ENCODE measurements at regions of chr11 and their contacts with region 1.

Region 1: DNA sequence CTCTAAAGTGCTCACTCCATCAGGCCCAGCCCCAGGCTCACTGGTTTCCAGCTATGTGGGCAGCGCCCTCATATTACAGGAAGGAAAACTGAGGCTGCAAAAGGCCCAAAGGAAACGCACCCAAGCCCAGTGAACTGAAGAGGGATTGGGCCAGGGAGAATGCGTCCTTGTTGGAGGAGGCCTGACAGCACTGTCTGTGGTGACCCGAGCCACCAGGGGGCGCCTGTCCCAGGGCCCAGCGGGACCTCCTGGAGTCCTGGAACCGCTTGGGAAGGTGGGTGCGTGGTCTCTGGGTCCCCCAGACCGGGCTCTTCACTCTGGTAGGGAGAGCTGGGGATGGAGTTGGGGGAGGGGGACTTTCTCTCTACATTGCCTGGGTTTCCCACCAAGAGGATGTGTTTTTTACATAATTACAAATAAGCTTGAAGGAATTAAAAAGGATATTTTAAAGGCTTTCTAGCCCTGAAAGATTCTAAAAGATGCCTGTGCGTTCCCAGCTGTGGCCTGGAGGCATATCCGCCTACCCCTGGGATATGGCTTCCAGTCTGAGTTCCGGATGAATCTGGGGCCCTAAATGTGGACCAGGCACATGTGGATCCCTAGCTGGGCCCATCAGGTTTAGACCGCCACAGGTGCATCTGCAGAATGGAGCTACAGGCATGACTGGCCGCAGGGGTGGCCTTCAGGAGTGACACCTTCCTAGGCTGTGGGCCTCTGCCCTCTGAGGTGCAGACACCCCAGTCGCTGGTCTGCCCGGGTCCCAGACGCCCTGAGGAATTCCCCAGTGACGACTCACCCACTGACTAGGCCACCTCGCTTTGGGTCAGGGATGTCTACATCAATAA is 4.2 kb downstream of the SPI1 start:
- DNase-seq: peak; percentile 74 to 84
- ATAC-seq: peak; percentile 88 to 96
- H3K4me3 ChIP-seq: no peak overlapping the region
- H3K27ac ChIP-seq: peak overlapping the region; percentile 31 to 58; a peak in 3 of 6 replicates
- H3K4me1 ChIP-seq: peaks cover 21% of the 10 kb centered on the region
- CTCF ChIP-seq: peak; percentile 93
- EP300 ChIP-seq: no peak
- POLR2A ChIP-seq: no peak
- RAD21 ChIP-seq: peak; percentile 65 to 68

Region 2: DNA sequence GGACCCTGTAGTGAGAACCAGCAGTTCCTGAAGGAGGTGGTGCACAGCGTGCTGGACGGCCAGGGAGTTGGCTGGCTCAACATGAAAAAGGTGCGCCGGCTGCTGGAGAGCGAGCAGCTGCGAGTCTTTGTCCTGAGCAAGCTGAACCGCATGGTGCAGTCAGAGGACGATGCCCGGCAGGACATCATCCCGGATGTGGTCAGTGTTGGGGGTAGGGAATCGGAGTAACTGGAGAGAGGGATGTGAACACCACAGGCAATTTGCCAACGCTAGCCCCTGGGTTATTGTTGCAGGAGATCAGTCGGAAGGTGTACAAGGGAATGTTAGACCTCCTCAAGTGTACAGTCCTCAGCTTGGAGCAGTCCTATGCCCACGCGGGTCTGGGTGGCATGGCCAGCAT is 84.2 kb before region 1 on chr11:
- CTCF ChIA-PET with region 1: interaction called, 10 read pairs
- POLR2A ChIA-PET with region 1: no interaction called
- DNase-seq: no peak
- ATAC-seq: peak in 1 of 2 experiments; percentile 30; a peak in 1 of 6 replicates
- H3K4me3 ChIP-seq: no peak overlapping the region
- H3K27ac ChIP-seq: no peak overlapping the region
- H3K4me1 ChIP-seq: no peaks in the 10 kb centered on the region
- CTCF ChIP-seq: no peak
- EP300 ChIP-seq: no peak
- POLR2A ChIP-seq: no peak
- RAD21 ChIP-seq: no peak

Region 3: GRCh38 chr11:47355283-47356128 is 18.6 kb before region 1 on chr11:
- CTCF ChIA-PET with region 1: interaction called, 19 read pairs
- POLR2A ChIA-PET with region 1: no interaction called
- DNase-seq: peak; percentile 89 to 98
- ATAC-seq: peak; percentile 92 to 97
- H3K4me3 ChIP-seq: peak overlapping the region; percentile 43
- H3K27ac ChIP-seq: peak overlapping the region; percentile 90 to 97
- H3K4me1 ChIP-seq: peaks cover 4% of the 10 kb centered on the region; the same call in 1 of the 3 replicates
- CTCF ChIP-seq: peak; percentile 100
- EP300 ChIP-seq: no peak
- POLR2A ChIP-seq: no peak
- RAD21 ChIP-seq: peak; percentile 99 to 100

Region 4: DNA sequence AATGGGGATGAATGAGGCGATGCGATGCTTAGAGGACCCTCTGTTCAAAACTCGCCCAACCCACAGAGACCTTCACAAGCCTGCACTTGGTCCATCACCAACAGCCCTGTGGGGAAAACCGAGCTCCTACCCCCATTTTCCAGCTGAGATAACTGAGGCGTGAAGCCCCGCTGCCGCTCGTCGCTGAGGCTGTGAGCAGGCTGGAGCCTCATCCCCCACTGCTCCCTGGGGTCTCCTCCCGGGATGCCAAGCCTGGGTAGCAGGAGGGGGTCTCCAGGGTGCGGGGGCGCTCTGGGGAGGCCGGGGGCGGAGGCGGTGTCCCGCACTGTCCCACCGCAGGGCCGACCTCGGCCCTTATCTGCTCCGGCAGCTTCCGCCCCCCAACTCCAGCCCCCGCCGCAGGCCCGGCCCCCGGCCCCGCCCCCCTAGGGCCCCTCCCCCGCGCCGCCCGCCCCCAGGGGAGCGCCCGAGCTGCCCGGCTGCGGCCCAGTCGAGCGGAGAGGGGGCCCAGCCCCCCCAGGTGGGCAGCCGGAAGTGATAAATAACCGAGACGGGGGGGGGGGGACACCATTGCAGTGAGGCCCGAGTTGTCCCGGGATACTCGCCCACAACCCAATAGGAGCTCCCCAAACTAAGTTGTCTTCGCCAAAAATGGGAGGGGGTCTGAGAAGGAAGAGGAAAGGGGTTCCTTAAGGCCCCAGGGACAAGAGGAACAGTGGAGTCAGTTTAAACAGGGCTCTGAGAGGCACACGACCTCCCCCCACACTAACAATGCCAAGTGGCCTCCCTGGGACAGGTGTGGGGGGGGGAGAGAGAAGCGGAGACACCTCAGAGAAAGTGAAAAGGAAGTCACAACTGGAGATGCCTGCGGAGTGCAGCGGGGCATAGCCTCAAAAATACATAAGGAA is 26.0 kb after region 1 on chr11:
- CTCF ChIA-PET with region 1: interaction called, 27 read pairs
- POLR2A ChIA-PET with region 1: no interaction called
- DNase-seq: no peak
- ATAC-seq: peak; percentile 32 to 62; a peak in 4 of 6 replicates
- H3K4me3 ChIP-seq: peak overlapping the region; percentile 63
- H3K27ac ChIP-seq: peak overlapping the region; percentile 73 to 87
- H3K4me1 ChIP-seq: peaks cover 6% of the 10 kb centered on the region; the same call in 2 of the 3 replicates
- CTCF ChIP-seq: no peak
- EP300 ChIP-seq: no peak
- POLR2A ChIP-seq: no peak
- RAD21 ChIP-seq: no peak

Region 5: DNA sequence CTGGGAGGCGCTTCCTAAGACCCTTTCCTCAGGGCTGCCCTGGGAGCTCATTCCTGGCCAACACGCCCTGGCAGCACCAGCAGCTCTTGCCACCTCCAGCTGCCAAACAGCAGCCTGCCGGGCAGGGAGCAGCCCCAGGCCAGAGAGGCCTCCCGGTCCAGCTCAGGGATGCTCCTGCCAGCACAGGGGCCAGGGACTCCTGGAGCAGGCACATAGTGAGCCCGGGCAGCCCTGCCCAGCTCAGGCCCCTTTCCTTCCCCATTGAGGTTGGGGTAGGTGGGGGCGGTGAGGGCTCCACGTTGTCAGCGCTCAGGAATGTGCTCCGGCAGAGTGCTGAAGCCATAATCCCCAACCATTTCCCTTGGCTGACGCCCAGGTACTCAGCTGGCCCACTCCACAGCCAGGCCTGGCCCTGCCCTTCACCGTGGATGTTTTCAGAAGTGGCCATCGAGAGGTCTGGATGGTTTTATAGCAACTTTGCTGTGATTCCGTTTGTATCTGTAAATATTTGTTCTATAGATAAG is 41.9 kb after region 1 on chr11:
- CTCF ChIA-PET with region 1: interaction called, 96 read pairs
- POLR2A ChIA-PET with region 1: no interaction called
- DNase-seq: peak; percentile 37 to 40
- ATAC-seq: peak; percentile 32 to 61
- H3K4me3 ChIP-seq: no peak overlapping the region
- H3K27ac ChIP-seq: peak overlapping the region; percentile 31 to 81; a peak in 3 of 6 replicates
- H3K4me1 ChIP-seq: peaks cover 11% of the 10 kb centered on the region
- CTCF ChIP-seq: no peak
- EP300 ChIP-seq: no peak
- POLR2A ChIP-seq: no peak
- RAD21 ChIP-seq: no peak

Region 6: DNA sequence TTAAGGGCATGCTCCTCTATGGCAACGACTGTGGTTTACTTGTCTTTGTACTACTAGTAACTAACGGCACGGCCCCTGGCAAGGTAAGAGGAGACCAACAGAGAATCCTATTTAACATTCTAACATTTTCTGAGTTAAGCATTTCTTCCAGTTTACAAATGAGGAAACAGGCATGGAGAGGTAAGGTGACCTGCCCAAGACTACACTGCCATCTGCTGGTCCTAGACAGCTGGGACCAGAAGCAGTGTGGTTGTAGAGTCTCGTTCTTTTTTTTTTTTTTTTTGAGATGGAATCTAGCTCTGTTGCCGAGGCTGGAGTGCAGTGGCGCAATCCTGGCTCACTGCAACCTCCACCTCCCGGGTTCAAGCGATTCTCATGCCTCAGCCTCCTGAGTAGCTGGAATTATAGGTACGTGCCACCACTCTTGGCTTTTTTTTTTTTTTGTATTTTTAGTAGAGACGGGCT is 80.1 kb after region 1 on chr11:
- CTCF ChIA-PET with region 1: interaction called, 21 read pairs
- POLR2A ChIA-PET with region 1: no interaction called
- DNase-seq: peak; percentile 67 to 86
- ATAC-seq: peak; percentile 94 to 96
- H3K4me3 ChIP-seq: no peak overlapping the region
- H3K27ac ChIP-seq: no peak overlapping the region
- H3K4me1 ChIP-seq: no peaks in the 10 kb centered on the region
- CTCF ChIP-seq: peak; percentile 73
- EP300 ChIP-seq: no peak
- POLR2A ChIP-seq: no peak
- RAD21 ChIP-seq: peak; percentile 67 to 74